Tibial artery (tissue), 4 donors: ENCODE measurements at regions of chr7 and their contacts with region 1.

Region 1: DNA sequence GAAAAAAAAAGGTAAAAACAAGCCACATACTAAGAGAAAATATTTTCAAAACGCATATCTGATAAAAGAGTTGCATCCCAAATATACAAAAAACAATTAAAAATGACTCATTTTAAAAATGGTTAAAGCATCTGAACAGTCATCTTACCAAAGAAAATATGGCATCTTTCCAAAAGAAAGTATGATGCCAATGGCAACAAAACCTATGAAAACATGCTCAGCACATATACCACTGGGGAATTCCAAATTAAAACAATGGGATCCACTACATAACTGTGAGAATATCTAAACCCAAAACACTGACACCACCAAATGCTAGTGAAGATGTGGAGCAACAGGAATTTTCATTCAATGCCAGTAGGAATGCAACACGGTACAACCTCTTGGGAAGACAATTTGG is 39.3 kb downstream of the VSTM2A start:
- DNase-seq: no peak
- H3K4me3 ChIP-seq: no peak overlapping the region
- H3K27ac ChIP-seq: no peak overlapping the region
- H3K4me1 ChIP-seq: no peaks in the 10 kb centered on the region
- H3K27me3 ChIP-seq: no peaks in the 10 kb centered on the region
- CTCF ChIP-seq: no peak

Region 2: GRCh38 chr7:54541669-54542625 is 39.6 kb before region 1 on chr7 and contains the start of gene VSTM2A:
- intact Hi-C with region 1: loop called (anchors 5 kb)
- DNase-seq: no peak
- H3K4me3 ChIP-seq: peak within 1 kb of the TSS; percentile 30 to 40
- H3K27ac ChIP-seq: no peak within 1 kb of the TSS
- H3K4me1 ChIP-seq: peaks cover 0 to 25% (median 14%) of the 10 kb centered on the region in 4 donors
- H3K27me3 ChIP-seq: peaks cover 0 to 56% of the 10 kb centered on the region in 2 donors
- CTCF ChIP-seq: no peak

Region 3: DNA sequence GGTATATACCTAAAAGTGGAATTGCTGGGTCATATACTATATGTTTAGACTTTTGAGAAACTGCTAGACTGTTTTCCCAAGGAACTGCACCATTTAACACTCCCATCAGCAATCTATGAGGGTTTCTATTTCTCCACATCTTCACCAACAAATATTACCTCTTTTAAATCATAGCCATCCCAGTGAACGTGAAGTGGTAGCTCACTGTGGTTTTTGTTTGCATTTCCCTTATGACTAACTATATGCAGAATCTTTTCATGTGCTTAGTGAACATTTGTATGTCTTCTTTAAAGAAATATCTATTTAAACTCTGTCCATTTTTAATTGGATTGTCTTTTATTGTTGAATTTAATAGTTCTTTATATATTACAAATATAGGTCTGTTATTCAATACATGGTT is 293.3 kb after region 1 on chr7:
- intact Hi-C with region 1: no loop called
- DNase-seq: no peak
- H3K4me3 ChIP-seq: no peak overlapping the region
- H3K27ac ChIP-seq: no peak overlapping the region
- H3K4me1 ChIP-seq: no peaks in the 10 kb centered on the region
- H3K27me3 ChIP-seq: no peaks in the 10 kb centered on the region
- CTCF ChIP-seq: no peak